ENCODE measurements at regions of chr1 and their contacts with region 1.

Region 1: DNA sequence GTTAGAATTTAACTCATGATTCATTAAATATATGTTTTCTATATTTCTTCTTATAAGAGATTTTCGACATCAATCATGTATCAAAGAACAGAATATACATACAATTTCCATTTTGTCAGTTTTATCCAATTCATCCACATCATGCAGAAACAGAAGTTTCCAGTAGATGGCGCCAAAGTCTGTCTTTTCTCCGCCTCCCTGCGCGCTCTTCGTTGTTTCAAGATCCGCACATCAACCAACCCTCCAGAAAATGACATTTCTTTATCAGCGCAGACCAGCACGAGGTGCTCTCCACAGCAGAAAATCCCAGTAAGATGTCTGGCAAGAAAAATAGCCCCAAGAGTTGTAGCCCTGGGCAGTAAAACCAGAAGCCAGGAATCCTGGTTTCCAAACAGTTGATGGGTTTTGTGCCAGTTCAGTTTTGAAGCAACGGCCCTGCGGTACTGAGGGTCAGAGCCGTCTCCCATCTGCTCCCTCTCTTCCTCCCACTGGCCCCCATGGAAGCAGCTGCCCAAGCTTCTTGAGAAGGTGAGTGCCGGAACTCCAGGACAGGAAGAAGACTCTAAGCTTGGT is 38.6 kb upstream of the GPR137B start:
- DNase-seq: peak in 1 of 2 experiments; percentile 65
- H3K4me3 ChIP-seq: no peak overlapping the region
- H3K4me3 Mint-ChIP-seq: no peak overlapping the region
- H3K27ac Mint-ChIP-seq: no peak overlapping the region
- H3K4me1 ChIP-seq: no peaks in the 10 kb centered on the region
- H3K4me1 Mint-ChIP-seq: no peaks in the 10 kb centered on the region
- H3K27me3 ChIP-seq: no peaks in the 10 kb centered on the region
- H3K27me3 Mint-ChIP-seq: no peaks in the 10 kb centered on the region
- CTCF ChIP-seq: peak; percentile 70 to 79

Region 2: GRCh38 chr1:236021424-236022135 is 82.2 kb before region 1 on chr1:
- CTCF ChIA-PET with region 1: no interaction called
- POLR2A ChIA-PET with region 1: no interaction called
- intact Hi-C with region 1: no loop called
- DNase-seq: no peak
- H3K4me3 ChIP-seq: no peak overlapping the region
- H3K4me3 Mint-ChIP-seq: no peak overlapping the region
- H3K27ac Mint-ChIP-seq: no peak overlapping the region
- H3K4me1 ChIP-seq: peaks cover 1% of the 10 kb centered on the region; the same call in 1 of the 2 replicates
- H3K4me1 Mint-ChIP-seq: peaks cover 6% of the 10 kb centered on the region
- H3K27me3 ChIP-seq: no peaks in the 10 kb centered on the region
- H3K27me3 Mint-ChIP-seq: no peaks in the 10 kb centered on the region
- CTCF ChIP-seq: no peak

Region 3: GRCh38 chr1:236287757-236288619 is 184.3 kb after region 1 on chr1:
- CTCF ChIA-PET with region 1: no interaction called
- POLR2A ChIA-PET with region 1: no interaction called
- intact Hi-C with region 1: loop called (anchors 5 kb)
- DNase-seq: peak; percentile 49 to 66
- H3K4me3 ChIP-seq: no peak overlapping the region
- H3K4me3 Mint-ChIP-seq: no peak overlapping the region
- H3K27ac Mint-ChIP-seq: no peak overlapping the region
- H3K4me1 ChIP-seq: no peaks in the 10 kb centered on the region
- H3K4me1 Mint-ChIP-seq: no peaks in the 10 kb centered on the region
- H3K27me3 ChIP-seq: no peaks in the 10 kb centered on the region
- H3K27me3 Mint-ChIP-seq: peaks cover 10% of the 10 kb centered on the region
- CTCF ChIP-seq: no peak

Region 4: GRCh38 chr1:236365999-236366570 is 262.4 kb after region 1 on chr1:
- CTCF ChIA-PET with region 1: no interaction called
- POLR2A ChIA-PET with region 1: no interaction called
- intact Hi-C with region 1: no loop called
- DNase-seq: no peak
- H3K4me3 ChIP-seq: no peak overlapping the region
- H3K4me3 Mint-ChIP-seq: no peak overlapping the region
- H3K27ac Mint-ChIP-seq: no peak overlapping the region
- H3K4me1 ChIP-seq: no peaks in the 10 kb centered on the region
- H3K4me1 Mint-ChIP-seq: no peaks in the 10 kb centered on the region
- H3K27me3 ChIP-seq: no peaks in the 10 kb centered on the region
- H3K27me3 Mint-ChIP-seq: no peaks in the 10 kb centered on the region
- CTCF ChIP-seq: no peak

Region 5: DNA sequence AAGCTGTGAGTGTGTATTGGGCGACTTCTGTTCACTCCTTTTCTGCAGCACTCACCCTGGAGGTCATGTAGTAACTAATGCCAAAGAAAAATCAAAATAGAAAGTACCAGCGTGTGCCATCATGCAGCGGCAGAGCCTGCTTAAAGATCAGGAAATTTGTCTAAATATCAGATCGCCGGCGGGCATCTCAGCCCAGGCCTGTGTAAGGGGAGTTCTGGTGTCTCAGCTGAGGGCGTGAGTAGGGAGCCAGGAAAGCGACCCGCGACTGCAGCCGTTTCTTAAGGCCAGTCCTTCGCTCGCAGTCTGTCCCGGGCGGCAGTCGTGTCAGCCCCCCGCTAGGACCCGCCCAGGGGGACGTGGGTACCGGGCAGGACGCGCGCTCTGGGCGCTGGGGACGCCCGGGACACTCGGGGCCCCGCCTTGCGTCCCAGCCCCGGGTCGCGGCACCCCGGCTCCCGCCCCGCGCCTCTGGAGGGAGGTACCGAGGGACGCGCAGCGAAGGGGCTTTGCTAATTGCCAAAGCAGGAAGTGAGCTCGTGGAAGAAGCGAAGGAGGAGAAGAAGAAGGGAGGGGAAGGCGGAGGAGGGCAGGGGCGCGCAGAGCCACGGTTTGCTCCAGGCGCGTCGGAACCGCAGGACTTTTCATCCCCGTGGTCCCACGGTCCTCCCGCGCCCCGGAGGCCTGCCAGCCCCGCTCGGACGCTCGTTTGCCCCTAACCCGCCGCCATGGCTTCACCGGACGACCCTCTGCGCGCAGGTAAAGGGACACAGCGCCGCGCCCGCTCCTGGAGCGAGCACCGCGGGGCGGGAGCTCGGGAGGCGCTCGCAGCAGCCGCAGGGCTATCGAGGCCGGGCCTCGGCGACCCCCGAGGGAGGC is 291.4 kb after region 1 on chr1:
- CTCF ChIA-PET with region 1: no interaction called
- POLR2A ChIA-PET with region 1: no interaction called
- intact Hi-C with region 1: loop called (anchors 2 kb)
- DNase-seq: peak; percentile 55 to 65
- H3K4me3 ChIP-seq: peak overlapping the region; percentile 82
- H3K4me3 Mint-ChIP-seq: peak overlapping the region; percentile 85
- H3K27ac Mint-ChIP-seq: peak overlapping the region; percentile 74
- H3K4me1 ChIP-seq: peaks cover 30% of the 10 kb centered on the region
- H3K4me1 Mint-ChIP-seq: peaks cover 23% of the 10 kb centered on the region
- H3K27me3 ChIP-seq: no peaks in the 10 kb centered on the region
- H3K27me3 Mint-ChIP-seq: no peaks in the 10 kb centered on the region
- CTCF ChIP-seq: no peak

Region 6: DNA sequence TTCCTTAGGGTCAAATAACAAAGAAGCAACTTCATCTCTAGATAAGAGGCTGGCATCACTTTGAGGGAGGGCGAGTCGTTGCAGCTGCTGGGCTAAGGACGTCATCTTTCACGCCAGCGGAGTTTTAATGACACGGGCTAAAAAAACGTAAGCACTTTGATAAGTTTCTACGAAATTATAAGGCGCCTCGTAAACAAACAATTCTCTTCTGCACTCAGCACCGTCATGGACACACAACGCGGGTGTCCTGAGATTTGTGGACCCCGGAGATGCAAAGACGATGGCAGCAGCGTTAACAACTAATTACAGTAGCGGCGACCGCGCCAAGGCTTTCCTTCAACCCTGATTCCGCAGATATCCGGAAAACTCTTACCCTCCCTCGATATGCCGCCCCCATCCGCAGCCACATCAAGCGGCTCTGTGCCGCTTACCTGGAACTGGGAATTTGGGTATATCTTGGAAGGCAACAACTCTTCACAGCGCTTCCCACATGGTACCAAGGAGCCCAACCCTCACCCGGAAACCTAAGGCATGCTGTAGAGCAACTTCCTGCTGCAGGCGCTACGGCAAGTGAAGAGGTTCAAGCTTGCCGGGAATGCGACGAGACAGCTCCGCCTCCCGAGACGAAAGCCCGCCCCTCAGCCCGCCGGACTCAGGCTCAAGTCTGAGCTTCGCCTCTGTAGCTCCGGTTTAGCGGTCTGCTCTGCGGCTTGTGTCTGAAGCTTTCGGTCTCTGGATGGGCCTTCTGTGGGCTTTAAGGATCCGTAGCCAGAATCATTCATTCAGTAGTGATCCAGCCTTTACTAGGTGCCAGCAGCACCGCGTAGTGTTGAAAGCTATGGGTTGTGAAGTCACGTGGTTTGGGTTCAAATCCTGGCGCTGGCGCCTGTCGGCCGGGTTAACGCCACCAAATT is 500.5 kb after region 1 on chr1 and contains the start of gene HEATR1:
- CTCF ChIA-PET with region 1: no interaction called
- POLR2A ChIA-PET with region 1: no interaction called
- intact Hi-C with region 1: loop called (anchors 2 kb)
- DNase-seq: peak; percentile 94 to 96
- H3K4me3 ChIP-seq: peak within 1 kb of the TSS; percentile 68
- H3K4me3 Mint-ChIP-seq: peak within 1 kb of the TSS; percentile 79
- H3K27ac Mint-ChIP-seq: peak within 1 kb of the TSS; percentile 85
- H3K4me1 ChIP-seq: no peaks in the 10 kb centered on the region
- H3K4me1 Mint-ChIP-seq: peaks cover 7% of the 10 kb centered on the region
- H3K27me3 ChIP-seq: no peaks in the 10 kb centered on the region
- H3K27me3 Mint-ChIP-seq: no peaks in the 10 kb centered on the region
- CTCF ChIP-seq: no peak
- total RNA-seq, gene HEATR1: 54.8 and 56.5 TPM in 2 replicates

Region 7: DNA sequence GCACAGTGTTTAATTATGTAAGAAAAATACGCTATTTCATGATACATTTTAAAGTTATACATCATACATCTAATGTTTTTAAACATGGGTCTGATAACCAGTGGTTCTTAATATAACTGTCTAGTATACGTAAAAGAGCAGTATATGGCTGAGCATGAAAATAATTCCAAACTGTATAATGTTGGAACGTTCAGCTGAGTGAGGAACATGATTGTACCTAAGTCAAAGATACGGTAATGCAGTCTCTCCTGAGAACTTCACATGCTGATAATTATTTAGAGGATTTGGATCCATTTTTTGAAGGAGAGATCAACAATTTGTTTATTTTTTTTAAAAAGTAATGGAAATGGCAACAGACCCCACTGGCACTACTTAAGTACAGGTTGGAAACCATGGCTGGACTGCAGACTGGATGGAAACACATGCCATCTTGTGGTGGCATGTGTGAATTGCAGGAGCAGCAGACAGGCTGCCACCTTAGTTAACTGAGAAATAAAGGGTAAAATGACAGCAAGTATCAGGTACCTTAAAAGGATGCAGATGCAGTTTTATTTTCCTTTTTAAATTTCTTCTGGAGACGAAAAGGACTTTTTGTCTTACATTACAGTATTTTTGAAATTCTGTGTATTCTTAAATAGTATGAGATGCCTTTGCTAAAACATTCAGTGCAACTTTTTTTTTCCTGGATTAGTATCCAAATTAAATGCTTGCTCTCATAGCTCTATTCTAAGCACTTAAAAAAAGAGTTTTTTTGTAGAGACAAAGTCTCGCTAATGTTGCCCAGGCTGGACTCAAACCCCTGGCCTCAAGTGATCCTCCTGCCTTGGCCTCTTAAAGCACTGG is 765.1 kb after region 1 on chr1:
- CTCF ChIA-PET with region 1: no interaction called
- POLR2A ChIA-PET with region 1: no interaction called
- intact Hi-C with region 1: loop called (anchors 1 kb)
- DNase-seq: peak in 1 of 2 experiments; percentile 58
- H3K4me3 ChIP-seq: no peak overlapping the region
- H3K4me3 Mint-ChIP-seq: no peak overlapping the region
- H3K27ac Mint-ChIP-seq: no peak overlapping the region
- H3K4me1 ChIP-seq: no peaks in the 10 kb centered on the region
- H3K4me1 Mint-ChIP-seq: no peaks in the 10 kb centered on the region
- H3K27me3 ChIP-seq: no peaks in the 10 kb centered on the region
- H3K27me3 Mint-ChIP-seq: no peaks in the 10 kb centered on the region
- CTCF ChIP-seq: peak; percentile 84 to 95

Region 8: DNA sequence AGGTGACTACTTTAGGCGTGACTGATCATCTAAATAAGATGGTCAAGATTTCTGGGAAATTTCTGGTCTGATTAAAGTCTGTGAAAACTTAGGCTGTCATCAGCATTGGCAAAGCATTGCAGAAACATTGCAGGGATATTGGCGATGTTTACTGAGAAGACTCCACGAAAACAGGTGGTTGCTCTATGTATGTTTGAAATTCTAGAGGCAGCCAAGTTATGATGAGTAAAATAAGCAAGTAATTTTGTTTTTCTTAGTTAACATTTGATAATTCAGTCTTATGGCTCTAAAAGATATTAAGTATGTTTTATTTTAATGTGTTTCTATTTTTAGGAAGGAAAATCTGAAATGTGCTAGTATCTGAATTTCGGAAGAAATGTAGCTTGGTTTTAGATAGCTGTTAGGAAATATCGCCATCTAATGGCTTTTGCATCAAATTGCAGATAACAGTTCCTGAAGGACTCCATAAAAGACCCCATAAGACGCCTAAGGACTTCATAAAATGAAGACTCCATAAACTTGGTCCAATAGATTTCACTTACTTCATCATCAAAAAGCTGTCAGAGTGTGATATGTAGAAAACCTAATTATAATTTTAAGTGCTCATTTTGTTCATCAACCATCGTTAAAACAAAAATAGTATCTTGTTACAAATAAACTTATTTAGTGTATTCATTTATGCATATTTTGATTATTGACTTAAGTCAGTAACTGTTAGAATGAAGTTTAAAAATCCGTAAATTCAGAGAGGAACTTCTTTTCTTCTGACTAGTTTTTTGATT is 1282.8 kb after region 1 on chr1:
- CTCF ChIA-PET with region 1: no interaction called
- POLR2A ChIA-PET with region 1: no interaction called
- intact Hi-C with region 1: loop called (anchors 1 kb)
- DNase-seq: no peak
- H3K4me3 ChIP-seq: no peak overlapping the region
- H3K4me3 Mint-ChIP-seq: no peak overlapping the region
- H3K27ac Mint-ChIP-seq: no peak overlapping the region
- H3K4me1 ChIP-seq: no peaks in the 10 kb centered on the region
- H3K4me1 Mint-ChIP-seq: no peaks in the 10 kb centered on the region
- H3K27me3 ChIP-seq: no peaks in the 10 kb centered on the region
- H3K27me3 Mint-ChIP-seq: peaks cover 3% of the 10 kb centered on the region
- CTCF ChIP-seq: peak; percentile 47 to 51